Breast epithelium (tissue), 4 donors: ENCODE measurements at regions of chr13 and their contacts with region 1.

Region 1: DNA sequence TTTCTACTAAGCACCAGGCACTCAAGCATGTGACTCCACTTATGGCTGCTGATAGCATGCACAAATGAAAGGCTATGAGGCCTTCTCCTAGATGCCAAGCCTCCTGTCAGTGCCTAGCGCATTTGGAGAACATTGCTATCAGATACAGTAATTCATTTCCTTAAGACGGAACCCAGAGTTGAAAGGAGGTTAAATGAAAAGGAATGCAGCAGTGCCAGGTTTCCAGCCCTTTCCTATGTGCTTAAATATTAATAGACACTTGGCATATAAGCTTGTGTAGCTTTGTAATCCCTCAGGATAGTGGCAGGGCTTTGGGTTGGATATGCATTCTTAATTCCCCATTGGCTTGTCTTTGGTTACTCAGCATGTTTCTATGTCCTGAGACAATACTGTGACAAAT is 140.1 kb upstream of the FRY start:
- DNase-seq: no peak
- H3K4me3 ChIP-seq: no peak overlapping the region
- H3K27ac ChIP-seq: no peak overlapping the region
- H3K4me1 ChIP-seq: no peaks in the 10 kb centered on the region
- H3K27me3 ChIP-seq: no peaks in the 10 kb centered on the region
- CTCF ChIP-seq: no peak
- POLR2A ChIP-seq: no peak

Region 2: DNA sequence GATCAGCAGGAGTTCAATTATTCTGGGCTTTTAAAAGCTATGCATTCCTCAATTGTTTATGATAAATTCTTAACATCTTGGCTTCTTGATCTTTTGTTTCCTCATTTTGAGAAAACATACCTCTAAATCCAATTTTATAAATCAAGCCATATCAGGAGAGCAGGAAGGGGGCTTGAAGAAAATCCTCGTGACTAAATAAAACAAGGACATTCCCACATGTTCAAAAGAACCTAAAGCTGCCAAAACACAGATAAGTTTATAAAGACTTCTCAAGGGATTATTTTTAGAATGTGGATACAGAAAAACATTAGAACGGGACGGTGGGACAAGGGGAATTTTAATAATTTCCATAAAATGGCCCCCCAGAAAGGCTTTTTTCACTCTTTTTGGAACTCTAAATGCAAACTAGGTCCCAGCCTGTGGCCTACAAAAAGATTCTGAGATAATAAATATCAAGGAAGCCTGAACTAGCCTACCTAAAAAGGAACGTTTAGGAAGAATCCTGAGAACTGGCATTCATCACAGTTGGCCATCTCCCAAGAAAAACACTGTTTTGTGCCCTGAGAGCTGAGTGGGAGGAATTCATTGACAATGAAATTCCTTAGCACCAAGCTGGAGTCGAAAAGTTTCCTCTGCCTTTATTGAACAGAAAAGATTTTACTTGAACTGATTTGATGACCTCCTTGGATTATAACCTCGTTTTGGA is 393.6 kb after region 1 on chr13:
- intact Hi-C with region 1: no loop called
- DNase-seq: peak in 1 of 2 donors; percentile 77
- H3K4me3 ChIP-seq: no peak overlapping the region
- H3K27ac ChIP-seq: peak overlapping the region; percentile 76 to 82
- H3K4me1 ChIP-seq: peaks cover 0 to 12% of the 10 kb centered on the region in 2 donors
- H3K27me3 ChIP-seq: no peaks in the 10 kb centered on the region
- CTCF ChIP-seq: no peak
- POLR2A ChIP-seq: no peak

Region 3: DNA sequence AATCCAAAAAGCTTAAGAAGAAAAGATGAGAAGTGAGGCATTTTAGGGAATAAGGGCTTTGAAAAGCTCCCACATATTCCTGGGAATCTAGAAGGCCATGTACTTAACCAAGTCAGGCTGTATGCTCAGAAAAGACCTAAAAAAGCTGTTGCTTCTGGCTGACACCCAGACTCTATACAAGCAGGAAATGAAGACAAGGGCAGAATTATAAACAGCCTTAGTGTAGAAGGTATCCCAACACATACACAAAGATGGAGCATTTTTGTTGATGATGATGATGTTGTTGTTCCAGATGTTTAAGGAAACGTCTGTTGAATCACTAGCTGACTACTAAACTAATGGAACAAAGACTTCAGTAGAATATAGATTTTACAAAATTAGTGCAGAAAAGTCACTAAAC is 562.5 kb after region 1 on chr13:
- intact Hi-C with region 1: loop called (anchors 5 kb)
- DNase-seq: no peak
- H3K4me3 ChIP-seq: no peak overlapping the region
- H3K27ac ChIP-seq: no peak overlapping the region
- H3K4me1 ChIP-seq: no peaks in the 10 kb centered on the region
- H3K27me3 ChIP-seq: no peaks in the 10 kb centered on the region
- CTCF ChIP-seq: no peak
- POLR2A ChIP-seq: no peak